AG04449 (cell line): ENCODE measurements at regions of chr17 and their contacts with region 1.

Region 1: DNA sequence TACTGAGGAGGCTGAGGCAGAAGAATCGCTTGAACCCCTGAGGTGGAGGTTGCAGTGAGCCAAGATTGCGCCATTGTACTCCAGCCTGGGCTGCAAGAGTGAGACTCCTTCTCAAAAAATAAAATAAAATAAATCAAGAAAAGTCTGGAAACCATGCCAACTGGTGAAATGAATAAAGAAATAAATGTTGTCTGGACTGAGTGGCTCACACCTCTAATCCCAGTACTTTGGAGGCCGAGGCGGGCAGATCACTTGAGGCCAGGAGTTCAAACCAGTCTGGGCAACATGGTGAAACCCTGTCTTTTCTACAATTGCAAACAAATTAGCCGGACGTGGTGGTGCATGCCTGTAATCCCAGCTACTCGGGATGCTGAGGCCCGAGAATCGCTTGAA is 744 bp upstream of the LRRC37A3 start:
- DNase-seq: no peak
- H3K4me3 ChIP-seq: peak overlapping the region; percentile 64
- CTCF ChIP-seq: no peak

Region 2: DNA sequence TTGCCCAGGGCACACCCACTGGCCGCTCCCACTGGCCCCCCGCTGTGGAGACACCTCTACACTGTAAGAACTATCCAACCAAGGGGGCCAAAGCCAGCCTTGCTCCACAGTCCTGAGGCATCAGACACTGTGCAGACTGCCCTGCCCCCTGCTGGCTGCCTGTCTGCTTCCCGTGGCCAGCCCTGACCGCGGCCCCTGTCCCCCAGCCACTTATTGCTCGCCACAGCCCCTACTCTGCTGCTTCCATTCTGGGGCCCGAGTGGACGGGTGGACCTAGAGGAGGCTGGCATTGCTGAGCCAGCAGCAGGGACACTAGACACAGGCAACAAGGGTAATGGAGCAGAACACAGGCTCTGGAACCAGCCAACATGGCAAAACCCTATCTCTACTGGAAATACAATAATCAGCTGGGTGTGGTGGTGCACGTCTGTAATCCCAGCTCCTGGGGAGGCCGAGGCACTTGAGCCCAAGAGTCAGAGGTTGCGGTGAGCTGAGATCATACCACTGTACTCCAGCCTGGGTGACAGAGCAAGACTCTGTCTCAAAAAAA is 19.0 kb after region 1 on chr17:
- CTCF ChIA-PET with region 1: interaction called, 14 read pairs
- POLR2A ChIA-PET with region 1: no interaction called
- DNase-seq: no peak
- H3K4me3 ChIP-seq: no peak overlapping the region
- CTCF ChIP-seq: peak; percentile 67

Region 3: DNA sequence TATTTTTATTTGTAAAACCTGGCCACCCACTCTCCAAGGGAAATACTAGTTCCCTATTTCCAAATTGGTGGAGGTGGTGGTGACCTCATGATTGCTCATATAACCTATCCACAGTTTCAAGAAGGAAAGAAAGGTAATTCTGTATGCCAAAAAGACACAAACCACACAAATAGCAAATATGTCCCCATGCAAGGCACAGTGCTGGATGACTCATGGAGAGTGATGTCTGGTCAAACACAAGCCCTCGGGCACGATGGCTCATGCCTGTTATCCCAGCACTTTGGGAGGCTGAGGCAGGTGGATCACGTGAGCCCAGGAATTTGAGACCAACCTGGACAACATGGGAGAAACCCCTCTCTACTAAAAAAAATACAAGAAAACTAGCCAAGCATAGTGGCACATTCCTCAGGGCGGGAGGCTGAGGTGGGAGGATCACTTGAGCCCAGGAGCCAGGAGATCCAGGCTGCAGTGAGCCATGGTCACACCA is 72.3 kb after region 1 on chr17:
- CTCF ChIA-PET with region 1: no interaction called
- POLR2A ChIA-PET with region 1: no interaction called
- DNase-seq: no peak
- H3K4me3 ChIP-seq: no peak overlapping the region
- CTCF ChIP-seq: no peak

Region 4: GRCh38 chr17:65039336-65039988 is 119.4 kb after region 1 on chr17:
- CTCF ChIA-PET with region 1: no interaction called
- POLR2A ChIA-PET with region 1: no interaction called
- DNase-seq: no peak
- H3K4me3 ChIP-seq: no peak overlapping the region
- CTCF ChIP-seq: no peak